ENCODE measurements at regions of chr12 and their contacts with region 1.

Region 1: DNA sequence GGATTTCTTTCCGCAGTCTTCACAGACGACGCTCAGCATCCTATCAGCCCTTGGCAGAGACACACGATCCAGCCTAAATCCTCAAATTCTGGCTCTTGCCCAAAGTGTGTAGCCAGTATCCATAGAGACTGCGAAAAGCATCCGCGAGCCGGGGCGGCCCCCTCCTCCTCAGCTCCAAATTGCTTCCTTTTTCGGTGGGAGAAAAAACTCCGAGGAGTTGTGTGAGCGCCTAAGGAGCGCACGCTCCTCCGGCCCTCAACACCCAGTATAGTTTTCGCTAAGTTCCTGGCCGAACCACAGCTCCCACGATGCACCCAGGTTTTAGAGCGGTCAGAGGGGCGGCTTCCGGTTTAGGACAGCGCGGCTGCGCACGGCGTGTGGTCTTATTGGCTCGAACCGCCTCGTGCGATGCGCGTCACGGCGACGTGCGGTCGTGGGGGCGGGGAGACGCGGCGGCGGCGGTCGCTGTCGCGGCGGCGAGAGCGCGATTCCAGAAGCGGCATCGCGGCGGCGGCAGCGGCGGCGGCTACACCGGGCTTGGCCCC is at the start of gene ADIPOR2:
- DNase-seq: peak; percentile 96
- H3K4me3 Mint-ChIP-seq: peak within 1 kb of the TSS; percentile 93
- H3K27ac Mint-ChIP-seq: peak within 1 kb of the TSS; percentile 99
- H3K4me1 Mint-ChIP-seq: peaks cover 39% of the 10 kb centered on the region
- H3K27me3 Mint-ChIP-seq: no peaks in the 10 kb centered on the region
- total RNA-seq, gene ADIPOR2: 43.8 to 47.3 TPM

Region 2: GRCh38 chr12:1517007-1517406 is 173.6 kb before region 1 on chr12:
- CTCF ChIA-PET with region 1: no interaction called
- POLR2A ChIA-PET with region 1: no interaction called
- intact Hi-C with region 1: no loop called
- DNase-seq: no peak
- H3K4me3 Mint-ChIP-seq: no peak overlapping the region
- H3K27ac Mint-ChIP-seq: no peak overlapping the region
- H3K4me1 Mint-ChIP-seq: no peaks in the 10 kb centered on the region
- H3K27me3 Mint-ChIP-seq: peaks cover 11% of the 10 kb centered on the region

Region 3: DNA sequence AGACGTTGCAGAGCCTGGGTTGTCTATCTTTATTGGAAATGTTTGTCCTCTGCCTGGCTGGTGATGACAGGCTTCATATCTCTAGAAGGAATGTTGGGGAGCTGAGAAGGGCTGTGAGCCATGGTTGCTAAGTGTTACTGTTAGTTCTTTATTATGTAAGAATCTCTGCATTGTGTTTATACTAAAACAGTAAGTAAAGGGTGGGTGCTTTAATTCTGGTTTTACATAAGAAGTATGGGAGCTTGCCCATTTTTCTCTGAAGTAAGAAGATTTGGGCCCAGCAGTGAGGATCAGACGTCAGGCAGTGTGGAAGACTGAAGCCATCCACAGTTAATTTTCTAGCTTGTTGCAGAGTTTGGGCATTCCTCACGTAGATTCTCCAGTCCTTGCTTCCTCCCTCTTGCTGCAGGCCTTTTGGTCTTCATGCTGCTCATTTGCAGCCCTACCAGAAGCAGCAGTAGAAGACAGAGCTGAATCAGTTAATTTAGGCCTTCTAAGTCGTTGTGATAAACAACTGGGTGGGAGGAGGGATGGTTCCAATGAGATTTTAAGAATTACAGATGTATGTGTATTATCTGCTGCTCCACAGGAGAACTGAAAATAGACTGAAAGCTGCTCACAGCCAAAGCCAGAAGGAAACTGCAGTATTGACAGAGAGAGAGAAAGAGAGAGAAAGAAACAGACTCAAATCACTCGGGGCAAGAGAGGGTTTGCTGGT is 40.2 kb before region 1 on chr12:
- CTCF ChIA-PET with region 1: interaction called, 11 read pairs
- POLR2A ChIA-PET with region 1: no interaction called
- intact Hi-C with region 1: loop called (anchors 5 kb)
- DNase-seq: no peak
- H3K4me3 Mint-ChIP-seq: no peak overlapping the region
- H3K27ac Mint-ChIP-seq: no peak overlapping the region
- H3K4me1 Mint-ChIP-seq: no peaks in the 10 kb centered on the region
- H3K27me3 Mint-ChIP-seq: peaks cover 10% of the 10 kb centered on the region

Region 4: GRCh38 chr12:1661553-1662335 is 28.9 kb before region 1 on chr12:
- CTCF ChIA-PET with region 1: interaction called, 4 read pairs
- POLR2A ChIA-PET with region 1: interaction called, 14 read pairs
- intact Hi-C with region 1: loop called (anchors 1 kb)
- DNase-seq: peak; percentile 91
- H3K4me3 Mint-ChIP-seq: peak overlapping the region; percentile 73
- H3K27ac Mint-ChIP-seq: peak overlapping the region; percentile 64
- H3K4me1 Mint-ChIP-seq: peaks cover 29% of the 10 kb centered on the region
- H3K27me3 Mint-ChIP-seq: no peaks in the 10 kb centered on the region

Region 5: DNA sequence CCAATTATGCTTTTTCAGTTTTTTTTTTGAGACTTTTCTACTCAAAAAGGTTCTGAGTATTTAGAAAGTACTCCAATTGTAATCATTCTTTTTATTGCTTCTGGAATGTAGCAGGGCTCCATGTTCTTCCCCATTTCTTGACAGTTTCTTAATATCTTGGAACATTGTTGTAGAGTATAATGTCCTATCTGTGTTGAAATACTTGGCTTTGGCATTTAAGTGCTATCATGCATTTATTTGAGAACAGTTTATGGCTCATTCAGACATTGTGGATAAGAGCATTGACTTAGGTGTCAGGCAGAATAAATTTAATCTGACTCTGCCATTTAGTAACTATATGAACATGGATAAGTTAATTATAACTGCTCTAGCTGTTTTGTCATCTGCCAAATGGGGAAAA is 28.5 kb after region 1 on chr12:
- CTCF ChIA-PET with region 1: no interaction called
- POLR2A ChIA-PET with region 1: no interaction called
- intact Hi-C with region 1: no loop called
- DNase-seq: no peak
- H3K4me3 Mint-ChIP-seq: no peak overlapping the region
- H3K27ac Mint-ChIP-seq: no peak overlapping the region
- H3K4me1 Mint-ChIP-seq: peaks cover 40% of the 10 kb centered on the region
- H3K27me3 Mint-ChIP-seq: no peaks in the 10 kb centered on the region

Measured in activated CD4-positive, alpha-beta memory T cell treated with anti-CD3 and anti-CD28 coated beads for 36 hours (primary cell).